ENCODE measurements at regions of chr5 and their contacts with region 1.

Region 1: DNA sequence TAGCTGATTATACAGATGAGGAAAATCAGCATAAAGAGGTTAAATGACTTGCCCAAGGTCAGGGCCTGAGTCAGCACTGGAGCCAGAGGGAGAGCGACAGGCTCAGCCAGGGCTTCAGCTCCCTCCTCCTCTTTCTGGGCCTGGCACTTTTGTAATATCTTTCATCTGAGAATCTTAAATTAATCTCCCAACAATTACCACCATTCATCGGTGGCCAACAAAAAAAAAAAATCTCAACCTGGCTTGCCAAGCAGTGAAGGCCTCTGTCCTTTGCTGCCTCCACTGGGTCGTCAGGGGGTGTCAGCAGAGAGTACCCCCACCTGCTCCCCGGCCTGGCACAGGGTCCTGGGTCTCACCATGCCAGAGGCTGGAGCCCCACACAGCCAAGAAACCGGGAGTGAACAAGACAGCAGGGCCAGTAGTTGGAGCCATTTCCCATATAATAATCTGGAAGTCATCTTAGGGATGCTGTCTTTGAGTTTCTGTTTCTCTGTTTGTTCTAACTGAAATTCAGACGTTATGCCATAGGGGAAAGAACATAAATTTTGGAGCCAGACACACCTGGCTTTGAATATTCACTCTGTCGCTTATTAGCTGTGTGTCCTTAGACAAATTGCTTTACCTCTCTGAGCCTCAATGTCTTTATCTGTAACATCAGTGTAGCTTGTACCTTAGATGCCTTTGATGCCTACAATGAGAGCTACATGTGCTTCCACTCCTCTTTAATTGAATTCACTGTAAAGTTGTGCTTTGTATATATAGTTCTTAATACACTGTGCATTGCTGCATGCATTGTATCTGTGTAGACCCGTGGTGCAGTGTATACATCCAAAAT is 299.9 kb upstream of the MSX2 start:
- DNase-seq: peak in 7 of 10 donors; percentile 39 to 69 (median 51)
- H3K4me3 ChIP-seq: no peak overlapping the region
- H3K27ac ChIP-seq: peak overlapping the region in 8 of 59 donors; percentile 6 to 51 (median 41)
- H3K27me3 ChIP-seq: no peaks in the 10 kb centered on the region
- CTCF ChIP-seq: peak in 49 of 56 donors; percentile 17 to 60 (median 41)

Region 2: GRCh38 chr5:174371595-174372128 is 52.8 kb before region 1 on chr5:
- intact Hi-C with region 1: no loop called
- DNase-seq: no peak
- H3K4me3 ChIP-seq: no peak overlapping the region
- H3K27ac ChIP-seq: no peak overlapping the region
- H3K27me3 ChIP-seq: peaks cover 0 to 8% (median 0%) of the 10 kb centered on the region in 45 donors
- CTCF ChIP-seq: no peak

Region 3: DNA sequence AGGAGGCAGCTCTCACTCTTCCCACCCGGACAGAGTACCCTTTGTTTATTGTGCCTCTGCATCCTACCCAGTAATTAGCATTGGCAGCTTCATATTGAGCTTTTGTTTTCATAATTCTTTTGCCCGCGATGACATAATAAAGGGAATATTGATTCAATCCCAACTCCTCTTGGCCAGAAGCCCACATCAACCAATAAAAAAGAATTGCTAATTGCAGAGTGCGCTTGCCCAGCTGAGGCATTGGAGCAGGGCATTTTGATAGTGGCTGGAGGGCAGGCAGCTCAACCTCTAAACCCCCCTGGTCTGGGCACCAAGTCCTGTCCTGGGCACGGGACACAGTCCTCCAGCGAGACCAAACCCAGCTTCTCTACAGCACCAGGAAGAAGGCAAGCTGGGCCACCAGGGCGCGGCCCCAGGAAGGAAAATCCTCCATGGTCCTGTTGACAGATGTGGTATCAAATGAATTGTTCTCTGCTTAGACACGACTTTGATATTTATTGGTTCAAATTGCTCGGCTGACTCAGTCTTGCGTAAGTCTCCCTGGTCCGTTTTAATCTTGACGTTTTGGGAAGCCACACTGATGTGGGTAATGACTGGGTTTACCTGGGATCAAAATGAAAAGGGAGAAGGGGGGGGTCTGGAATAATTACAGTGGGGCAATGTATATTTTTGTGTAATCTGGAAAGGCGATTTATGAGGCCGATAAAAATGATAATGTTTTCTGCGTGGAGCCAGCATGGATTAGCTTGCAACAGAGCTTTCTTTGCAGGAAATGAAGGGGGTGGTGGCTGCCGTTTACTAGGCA is 79.2 kb after region 1 on chr5:
- intact Hi-C with region 1: loop called (anchors 2 to 5 kb)
- DNase-seq: peak in 9 of 10 donors; percentile 43 to 75 (median 63)
- H3K4me3 ChIP-seq: peak overlapping the region; percentile 19 to 79 (median 53)
- H3K27ac ChIP-seq: peak overlapping the region; percentile 49 to 95 (median 90)
- H3K27me3 ChIP-seq: peaks cover 0 to 2% (median 0%) of the 10 kb centered on the region in 45 donors
- CTCF ChIP-seq: peak in 10 of 56 donors; percentile 8 to 30 (median 16)

Region 4: GRCh38 chr5:174581479-174581878 is 157.0 kb after region 1 on chr5:
- intact Hi-C with region 1: loop called in 1 of 2 experiments (anchors 10 kb)
- DNase-seq: no peak
- H3K4me3 ChIP-seq: no peak overlapping the region
- H3K27ac ChIP-seq: no peak overlapping the region
- H3K27me3 ChIP-seq: peaks cover 0 to 7% (median 0%) of the 10 kb centered on the region in 45 donors
- CTCF ChIP-seq: peak in 48 of 56 donors; percentile 10 to 63 (median 39)

Region 5: DNA sequence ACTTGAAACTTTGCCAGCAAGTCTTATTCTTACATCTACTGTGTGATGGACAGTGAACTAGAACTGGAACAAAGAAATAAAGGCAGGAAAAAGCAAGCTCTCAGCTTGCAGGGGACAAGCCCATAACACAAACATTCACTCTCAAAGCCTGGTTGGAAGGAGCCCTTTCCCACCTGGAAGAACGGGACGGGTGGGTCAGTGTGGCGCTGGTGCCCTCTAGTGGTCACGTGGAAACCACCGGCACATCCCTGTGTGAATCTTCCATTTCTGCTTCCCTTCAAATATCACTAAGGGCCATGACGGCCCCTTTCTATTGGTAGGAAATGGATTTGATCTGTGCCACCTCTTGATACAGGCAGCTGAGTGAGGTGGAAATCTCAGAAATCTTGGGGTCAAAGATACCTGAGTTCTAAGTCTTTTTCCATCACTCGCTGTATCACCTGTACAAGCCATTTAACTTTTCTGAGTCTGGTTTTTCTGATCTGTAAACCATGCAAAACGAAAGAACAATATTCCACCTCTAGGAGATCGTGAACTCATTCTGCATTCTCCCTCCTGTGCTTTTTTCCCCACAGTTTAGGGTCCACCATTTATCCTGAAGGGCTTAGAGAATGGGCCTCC is 511.5 kb after region 1 on chr5:
- intact Hi-C with region 1: loop called (anchors 5 kb)
- DNase-seq: peak in 9 of 10 donors; percentile 30 to 80 (median 67)
- H3K4me3 ChIP-seq: no peak overlapping the region
- H3K27ac ChIP-seq: peak overlapping the region in 9 of 59 donors; percentile 4 to 64 (median 21)
- H3K27me3 ChIP-seq: peaks cover 0 to 3% (median 0%) of the 10 kb centered on the region in 45 donors
- CTCF ChIP-seq: peak; percentile 72 to 97 (median 92)

Measured in dorsolateral prefrontal cortex (tissue), 120 donors.